ENCODE measurements at regions of chr10 and their contacts with region 1.

Region 1: DNA sequence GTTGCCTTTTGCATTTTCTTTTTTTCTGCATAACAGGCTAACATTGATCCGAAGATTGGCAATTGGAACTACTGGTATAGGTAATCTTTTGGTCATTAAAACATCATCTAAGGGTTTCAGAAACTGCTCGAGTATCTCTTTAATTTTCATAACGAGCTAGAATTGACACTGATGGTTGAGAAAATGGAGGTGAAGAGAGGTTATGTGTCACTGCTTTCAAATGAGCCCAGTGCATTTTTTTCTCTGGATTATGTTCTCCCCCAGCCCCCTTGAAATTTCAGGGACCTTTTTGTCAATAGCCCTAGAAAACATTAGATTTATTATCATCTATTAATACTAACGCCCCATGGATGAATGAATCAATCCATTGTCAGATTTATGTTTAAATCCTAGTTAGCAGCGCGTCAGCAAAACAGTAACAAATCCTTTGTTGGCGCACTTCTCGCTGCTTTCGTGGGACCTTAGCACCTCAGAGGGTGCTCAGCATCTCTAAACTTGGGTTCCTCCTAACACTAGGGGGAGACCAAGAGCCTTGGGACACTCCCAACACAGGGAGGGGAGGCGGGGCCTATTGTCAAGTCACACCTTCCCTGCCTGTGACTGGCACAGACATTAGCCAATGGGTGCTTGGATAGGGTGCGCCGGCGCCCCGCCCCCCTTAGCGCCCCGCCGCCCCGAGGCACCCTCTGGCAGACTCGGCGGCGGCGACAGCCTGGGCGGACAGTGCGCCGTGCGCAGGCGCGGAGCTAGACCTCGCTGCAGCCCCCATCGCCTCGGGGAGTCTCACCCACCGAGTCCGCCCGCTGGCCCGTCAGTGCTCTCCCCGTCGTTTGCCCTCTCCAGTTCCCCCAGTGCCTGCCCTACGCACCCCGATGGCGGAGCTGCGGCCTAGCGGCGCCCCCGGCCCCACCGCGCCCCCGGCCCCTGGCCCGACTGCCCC is at the start of gene SUFU:
- DNase-seq: peak; percentile 99

Region 2: DNA sequence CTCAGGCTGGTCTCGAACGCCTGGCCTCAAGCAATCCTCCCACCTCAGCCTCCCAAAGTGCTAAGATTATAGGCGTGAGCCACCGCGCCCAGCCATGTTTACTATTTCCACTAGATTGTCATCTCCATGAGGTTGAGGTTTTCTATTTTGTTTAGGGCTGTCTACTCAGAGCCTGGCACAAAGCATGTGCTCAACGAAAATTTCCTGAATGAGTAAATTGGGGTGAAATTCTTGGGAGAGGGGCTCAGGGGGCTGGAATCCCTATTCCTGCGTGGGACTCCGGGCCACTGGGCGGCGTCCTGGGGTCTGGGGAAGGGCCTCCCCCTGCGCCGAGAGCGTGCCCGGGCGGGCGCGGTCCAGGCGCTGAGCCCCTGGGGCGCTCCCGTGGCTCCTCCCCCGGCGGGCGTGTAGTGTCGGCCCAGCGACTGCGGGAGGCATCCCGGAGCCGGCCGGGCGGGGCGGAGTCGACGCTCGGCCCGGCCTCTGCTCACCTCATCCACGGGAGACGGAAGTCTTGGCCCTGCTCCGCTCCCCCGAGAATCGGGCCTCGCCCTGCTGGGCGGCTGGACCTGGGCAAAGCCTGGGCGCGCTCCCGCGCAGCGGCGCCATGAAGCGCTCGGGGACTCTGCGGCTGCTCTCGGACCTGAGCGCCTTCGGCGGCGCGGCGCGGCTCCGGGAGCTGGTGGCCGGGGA is 438.5 kb before region 1 on chr10 and contains the start of gene HPS6:
- in situ Hi-C with region 1: no loop called
- DNase-seq: peak; percentile 96

Region 3: GRCh38 chr10:102384053-102384452 is 119.5 kb before region 1 on chr10:
- in situ Hi-C with region 1: no loop called
- DNase-seq: no peak

Region 4: DNA sequence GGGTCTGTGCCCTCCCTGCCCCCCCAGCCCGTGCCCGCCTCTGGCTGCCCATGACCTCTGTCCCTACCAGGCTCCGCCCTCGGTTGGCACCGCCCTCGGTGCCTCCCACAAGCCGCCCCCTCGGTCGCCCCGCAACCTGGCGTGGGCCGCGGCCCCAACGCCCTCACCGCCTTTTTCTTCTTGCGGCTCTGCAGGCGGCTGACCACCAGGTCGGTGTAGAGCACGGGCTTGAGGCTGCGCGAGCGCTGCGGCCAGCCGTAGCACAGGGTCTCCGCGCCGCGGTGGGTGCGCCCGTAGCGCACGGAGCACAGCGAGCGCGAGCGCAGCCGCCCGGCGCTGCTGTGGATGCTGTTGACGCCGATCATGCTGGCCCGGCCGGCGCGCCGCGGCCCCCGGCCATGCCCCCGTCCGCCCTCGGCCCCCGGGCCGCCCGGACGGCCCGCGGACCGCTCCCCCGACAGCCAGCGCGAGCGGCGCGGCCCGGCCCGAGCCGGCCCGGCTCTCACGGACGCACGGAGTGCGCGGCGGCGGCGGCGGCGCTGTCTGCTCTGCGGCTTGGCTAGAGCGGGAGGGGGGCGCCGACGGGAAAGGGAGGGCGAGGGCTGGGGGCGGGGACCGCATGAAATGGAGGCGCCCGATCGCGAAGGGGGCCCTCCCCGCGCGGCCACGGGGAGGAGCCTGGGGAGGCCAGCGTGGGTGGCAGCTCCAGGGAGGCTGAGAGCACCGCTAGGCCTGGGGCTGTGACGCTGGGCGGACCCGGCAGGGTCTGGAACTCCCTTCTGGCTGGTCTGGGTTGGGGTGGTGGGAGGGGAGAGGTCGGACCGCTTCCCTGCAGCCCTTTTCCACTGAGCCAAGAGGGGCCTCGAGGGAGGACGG is 94.6 kb before region 1 on chr10:
- in situ Hi-C with region 1: no loop called
- DNase-seq: peak; percentile 7

Region 5: GRCh38 chr10:102596506-102596971 is 93.0 kb after region 1 on chr10:
- in situ Hi-C with region 1: loop called (anchors 10 kb)
- DNase-seq: peak; percentile 75